ENCODE measurements at regions of chr16 and their contacts with region 1.

Region 1: DNA sequence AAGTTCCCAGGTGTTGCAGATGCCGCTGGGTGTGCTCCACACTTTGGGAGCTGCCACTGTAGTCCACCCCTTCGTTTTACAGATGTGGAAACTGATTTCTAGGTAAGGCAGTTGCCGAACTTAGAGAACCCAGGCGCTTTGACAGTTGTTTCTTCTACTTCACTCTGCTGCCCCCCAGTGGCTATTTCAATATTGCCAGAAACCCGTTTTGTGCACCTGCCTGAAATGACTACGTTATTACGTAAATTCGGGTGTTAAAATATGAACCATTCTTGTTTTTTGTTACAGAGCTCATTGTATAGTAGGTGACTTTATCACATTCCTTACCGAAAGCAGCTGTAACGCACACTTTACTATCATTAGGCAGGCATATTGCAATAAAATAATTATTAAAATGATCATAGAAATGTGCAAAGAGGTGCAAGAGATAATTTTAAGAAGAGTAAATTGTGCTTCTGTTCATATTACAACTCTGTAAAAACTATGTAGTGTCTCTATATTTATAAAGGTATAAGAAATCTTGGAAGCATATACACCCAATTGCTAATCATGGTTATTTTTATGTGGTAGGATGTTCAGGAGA is 44.9 kb downstream of the OTOA start:
- DNase-seq: peak; percentile 77
- H3K4me3 ChIP-seq: no peak overlapping the region
- H3K27ac ChIP-seq: no peak overlapping the region
- H3K4me1 ChIP-seq: peaks cover 0 to 5% (median 2%) of the 10 kb centered on the region in 4 donors
- H3K27me3 ChIP-seq: peaks cover 0 to 6% (median 0%) of the 10 kb centered on the region in 3 donors
- CTCF ChIP-seq: peak; percentile 21 to 77 (median 60)
- EP300 ChIP-seq: no peak
- POLR2A ChIP-seq: no peak

Region 2: GRCh38 chr16:21656795-21657768 is 51.5 kb before region 1 on chr16:
- intact Hi-C with region 1: loop called (anchors 2 kb)
- DNase-seq: no peak
- H3K4me3 ChIP-seq: no peak overlapping the region
- H3K27ac ChIP-seq: peak overlapping the region in 1 of 4 donors; percentile 15
- H3K4me1 ChIP-seq: peaks cover 0 to 8% (median 3%) of the 10 kb centered on the region in 4 donors
- H3K27me3 ChIP-seq: no peaks in the 10 kb centered on the region
- CTCF ChIP-seq: peak in 3 of 4 experiments; percentile 50 to 81 (median 59)
- EP300 ChIP-seq: no peak
- POLR2A ChIP-seq: no peak